Heart left ventricle (tissue), 16 donors: ENCODE measurements at regions of chr2 and their contacts with region 1.

Region 1: DNA sequence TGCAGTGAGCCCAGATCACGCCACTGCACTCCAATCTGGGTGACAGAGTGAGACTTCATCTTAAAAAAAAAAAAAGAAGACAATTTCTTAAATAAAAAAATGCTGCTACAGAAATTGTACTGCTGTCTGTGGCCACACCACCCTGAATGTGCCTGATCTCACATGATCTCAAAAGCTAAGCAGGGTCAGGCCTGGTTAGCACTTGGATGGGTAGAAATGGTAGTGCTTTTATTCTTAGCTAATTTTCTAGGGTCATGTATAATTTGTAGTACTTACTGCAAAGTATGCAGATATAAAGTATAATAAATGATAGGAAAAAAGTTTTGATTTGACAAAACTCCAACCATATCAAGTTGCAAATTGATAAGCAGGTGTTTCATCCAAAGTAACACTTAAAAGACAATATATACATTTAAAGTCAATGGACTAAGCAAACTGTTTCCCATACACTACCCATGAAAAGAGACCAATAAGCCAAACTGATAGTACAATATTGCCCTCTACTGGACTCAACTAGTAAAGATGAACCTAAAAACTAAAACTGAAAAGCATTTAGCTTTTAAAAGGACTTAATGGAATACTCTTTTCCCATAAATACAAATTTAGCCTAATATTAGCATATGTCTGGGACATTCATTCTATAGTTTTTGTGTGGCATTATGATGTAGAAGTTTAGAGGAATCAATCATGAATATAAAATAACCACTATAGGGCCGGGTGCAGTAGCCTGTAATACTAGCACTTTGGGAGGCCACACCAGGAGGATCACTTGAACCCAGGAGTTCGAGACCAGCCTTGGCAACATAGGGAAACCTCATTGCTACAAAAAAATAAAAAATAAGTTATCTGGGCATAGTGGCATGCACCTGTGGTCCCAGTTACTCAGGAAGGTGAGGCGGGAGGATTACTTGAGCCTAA is 18.6 kb upstream of the PEX13 start:
- DNase-seq: no peak
- ATAC-seq: peak in 2 of 4 donors; percentile 42 to 51
- H3K4me3 ChIP-seq: no peak overlapping the region
- H3K27ac ChIP-seq: no peak overlapping the region
- H3K4me1 ChIP-seq: peaks cover 0 to 8% (median 0%) of the 10 kb centered on the region in 12 donors
- H3K27me3 ChIP-seq: no peaks in the 10 kb centered on the region
- CTCF ChIP-seq: peak; percentile 40 to 74 (median 67)
- POLR2A ChIP-seq: no peak

Region 2: GRCh38 chr2:60707750-60708371 is 291.0 kb before region 1 on chr2:
- intact Hi-C with region 1: loop called (anchors 1 to 5 kb)
- DNase-seq: no peak
- ATAC-seq: peak in 3 of 4 donors; percentile 25 to 44 (median 32)
- H3K4me3 ChIP-seq: no peak overlapping the region
- H3K27ac ChIP-seq: no peak overlapping the region
- H3K4me1 ChIP-seq: peaks cover 0 to 3% (median 0%) of the 10 kb centered on the region in 12 donors
- H3K27me3 ChIP-seq: peaks cover 0 to 3% (median 0%) of the 10 kb centered on the region in 9 donors
- CTCF ChIP-seq: peak; percentile 54 to 83 (median 74)
- POLR2A ChIP-seq: no peak

Region 3: GRCh38 chr2:60794277-60794863 is 204.5 kb before region 1 on chr2:
- intact Hi-C with region 1: loop called (anchors 2 to 5 kb)
- DNase-seq: no peak
- ATAC-seq: no peak
- H3K4me3 ChIP-seq: no peak overlapping the region
- H3K27ac ChIP-seq: no peak overlapping the region
- H3K4me1 ChIP-seq: peaks cover 0 to 31% (median 0%) of the 10 kb centered on the region in 12 donors
- H3K27me3 ChIP-seq: no peaks in the 10 kb centered on the region
- CTCF ChIP-seq: peak in 11 of 12 donors; percentile 14 to 57 (median 49)
- POLR2A ChIP-seq: no peak

Region 4: GRCh38 chr2:60806988-60807681 is 191.8 kb before region 1 on chr2:
- intact Hi-C with region 1: loop called in 1 of 10 experiments (anchors 5 kb)
- DNase-seq: no peak
- ATAC-seq: peak in 1 of 4 donors; percentile 44
- H3K4me3 ChIP-seq: no peak overlapping the region
- H3K27ac ChIP-seq: peak overlapping the region in 1 of 12 donors; percentile 47
- H3K4me1 ChIP-seq: peaks cover 0 to 13% (median 0%) of the 10 kb centered on the region in 12 donors
- H3K27me3 ChIP-seq: no peaks in the 10 kb centered on the region
- CTCF ChIP-seq: no peak
- POLR2A ChIP-seq: no peak